ENCODE measurements at regions of chr3 and their contacts with region 1.

Region 1: DNA sequence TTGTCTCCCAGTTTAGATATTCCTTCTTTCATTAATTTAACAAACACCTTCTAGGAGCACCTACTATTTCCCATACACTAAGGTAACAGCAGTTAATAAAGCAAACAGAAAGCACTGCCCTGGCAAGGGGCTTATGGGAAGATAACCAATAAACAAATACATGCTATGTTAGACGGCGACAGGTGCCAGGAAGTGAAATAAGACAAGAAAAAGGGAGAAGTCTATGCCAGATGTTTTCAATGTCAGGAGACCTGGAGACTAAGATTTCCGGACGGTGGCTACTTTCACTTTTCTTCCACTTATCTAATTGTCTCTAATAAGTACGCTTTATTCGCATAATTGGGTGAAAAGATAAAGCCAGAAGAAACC is 32.5 kb upstream of the ZNF445 start:
- DNase-seq: peak in 4 of 9 experiments; percentile 6 to 54 (median 21)
- ATAC-seq: peak; percentile 27
- H3K4me3 ChIP-seq: peak overlapping the region; percentile 78
- H3K4me3 Mint-ChIP-seq: peak overlapping the region; percentile 96
- H3K27ac ChIP-seq: peak overlapping the region; percentile 61 to 82
- H3K27ac Mint-ChIP-seq: peak overlapping the region; percentile 96
- H3K4me1 ChIP-seq: peaks cover 22% of the 10 kb centered on the region
- H3K4me1 Mint-ChIP-seq: peaks cover 49% of the 10 kb centered on the region
- H3K27me3 ChIP-seq: no peaks in the 10 kb centered on the region
- H3K27me3 Mint-ChIP-seq: no peaks in the 10 kb centered on the region
- CTCF ChIP-seq: no peak

Region 2: DNA sequence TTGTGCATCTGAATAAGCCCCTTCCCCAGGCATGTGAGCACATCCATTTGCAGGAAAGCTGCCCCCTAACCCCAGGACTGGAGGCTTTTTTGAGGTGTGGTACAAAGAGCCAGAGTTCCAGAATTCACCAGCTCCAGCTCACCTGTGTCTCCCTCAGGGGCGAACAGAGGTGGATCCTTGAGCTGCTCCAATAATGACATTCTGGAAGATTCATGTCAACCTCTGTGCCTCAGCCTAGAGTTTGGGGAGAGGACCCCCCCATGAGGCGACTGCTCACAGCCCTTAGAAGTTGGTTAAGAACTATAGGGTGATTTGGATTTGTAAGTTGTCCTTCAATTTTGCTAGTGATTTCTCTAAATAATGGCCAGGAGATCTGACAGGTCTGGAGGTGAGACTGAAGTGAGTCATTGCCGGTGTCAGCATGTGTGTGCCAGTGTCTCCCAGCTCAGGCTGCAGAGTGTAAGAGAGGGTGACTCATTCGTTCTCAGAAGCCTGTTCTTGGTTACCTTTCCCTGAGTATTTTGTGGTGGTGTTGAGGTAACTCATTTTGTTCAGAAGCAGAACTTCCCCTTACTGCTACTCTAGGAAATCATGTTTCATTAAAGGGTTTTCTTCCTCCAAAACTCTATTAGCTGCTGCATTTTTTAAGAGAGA is 405.2 kb before region 1 on chr3:
- CTCF ChIA-PET with region 1: no interaction called
- POLR2A ChIA-PET with region 1: no interaction called
- intact Hi-C with region 1: no loop called
- DNase-seq: peak in 1 of 9 experiments; percentile 9
- ATAC-seq: no peak
- H3K4me3 ChIP-seq: no peak overlapping the region
- H3K4me3 Mint-ChIP-seq: no peak overlapping the region
- H3K27ac ChIP-seq: no peak overlapping the region
- H3K27ac Mint-ChIP-seq: no peak overlapping the region
- H3K4me1 ChIP-seq: no peaks in the 10 kb centered on the region
- H3K4me1 Mint-ChIP-seq: peaks cover 3% of the 10 kb centered on the region
- H3K27me3 ChIP-seq: no peaks in the 10 kb centered on the region
- H3K27me3 Mint-ChIP-seq: peaks cover 13% of the 10 kb centered on the region
- CTCF ChIP-seq: no peak

Region 3: DNA sequence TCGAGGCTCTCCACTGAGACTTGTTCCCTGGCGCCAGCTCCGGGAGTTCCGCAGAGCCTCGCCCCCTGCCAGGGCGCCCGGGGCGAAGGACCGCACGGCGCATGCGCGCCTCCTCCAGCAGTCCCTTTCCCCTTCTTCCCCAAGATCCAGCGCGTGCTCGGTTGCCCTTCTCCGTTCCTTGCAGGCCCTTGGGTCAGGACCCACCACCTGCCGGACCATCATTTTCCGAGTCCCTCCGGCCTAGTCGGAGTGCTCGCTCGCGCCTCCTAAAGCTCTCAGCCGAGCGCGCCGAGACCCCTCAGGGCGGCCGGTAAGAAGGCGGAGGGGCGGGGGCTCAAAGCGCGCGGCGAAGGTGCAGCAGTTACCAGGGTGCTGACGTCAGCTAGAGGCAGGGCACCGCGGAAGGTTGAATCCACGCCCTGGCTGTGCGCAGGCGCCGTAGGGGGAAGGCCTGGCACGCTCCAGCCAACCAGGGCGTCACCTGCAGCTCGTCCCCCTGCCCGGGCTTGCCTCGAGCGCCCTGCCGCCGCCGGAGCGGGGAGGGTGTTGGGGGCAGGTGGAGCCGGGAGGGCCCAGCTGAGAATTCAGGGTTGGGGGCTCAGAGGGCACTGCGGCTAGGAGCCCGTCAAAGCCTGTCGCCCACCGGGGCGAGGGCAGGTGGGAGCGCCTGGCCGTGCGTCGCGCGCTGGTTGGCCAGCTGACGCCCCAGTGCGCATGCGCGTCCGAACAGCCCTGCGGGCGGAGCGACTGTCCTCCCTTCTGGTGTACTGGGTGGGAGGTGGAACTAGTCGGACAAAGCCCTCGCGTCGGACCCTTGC is 171.8 kb before region 1 on chr3 and contains the start of gene TCAIM:
- CTCF ChIA-PET with region 1: no interaction called
- POLR2A ChIA-PET with region 1: interaction called, 23 read pairs
- intact Hi-C with region 1: loop called (anchors 1 kb)
- DNase-seq: peak; percentile 97 to 100 (median 99)
- ATAC-seq: peak; percentile 92
- H3K4me3 ChIP-seq: peak within 1 kb of the TSS; percentile 76 to 91
- H3K4me3 Mint-ChIP-seq: peak within 1 kb of the TSS; percentile 93
- H3K27ac ChIP-seq: peak within 1 kb of the TSS; percentile 88 to 93
- H3K27ac Mint-ChIP-seq: peak within 1 kb of the TSS; percentile 97
- H3K4me1 ChIP-seq: peaks cover 15% of the 10 kb centered on the region
- H3K4me1 Mint-ChIP-seq: peaks cover 32% of the 10 kb centered on the region
- H3K27me3 ChIP-seq: no peaks in the 10 kb centered on the region
- H3K27me3 Mint-ChIP-seq: peaks cover 6% of the 10 kb centered on the region
- CTCF ChIP-seq: no peak
- total RNA-seq, gene TCAIM: 3.1 to 3.7 TPM

Region 4: DNA sequence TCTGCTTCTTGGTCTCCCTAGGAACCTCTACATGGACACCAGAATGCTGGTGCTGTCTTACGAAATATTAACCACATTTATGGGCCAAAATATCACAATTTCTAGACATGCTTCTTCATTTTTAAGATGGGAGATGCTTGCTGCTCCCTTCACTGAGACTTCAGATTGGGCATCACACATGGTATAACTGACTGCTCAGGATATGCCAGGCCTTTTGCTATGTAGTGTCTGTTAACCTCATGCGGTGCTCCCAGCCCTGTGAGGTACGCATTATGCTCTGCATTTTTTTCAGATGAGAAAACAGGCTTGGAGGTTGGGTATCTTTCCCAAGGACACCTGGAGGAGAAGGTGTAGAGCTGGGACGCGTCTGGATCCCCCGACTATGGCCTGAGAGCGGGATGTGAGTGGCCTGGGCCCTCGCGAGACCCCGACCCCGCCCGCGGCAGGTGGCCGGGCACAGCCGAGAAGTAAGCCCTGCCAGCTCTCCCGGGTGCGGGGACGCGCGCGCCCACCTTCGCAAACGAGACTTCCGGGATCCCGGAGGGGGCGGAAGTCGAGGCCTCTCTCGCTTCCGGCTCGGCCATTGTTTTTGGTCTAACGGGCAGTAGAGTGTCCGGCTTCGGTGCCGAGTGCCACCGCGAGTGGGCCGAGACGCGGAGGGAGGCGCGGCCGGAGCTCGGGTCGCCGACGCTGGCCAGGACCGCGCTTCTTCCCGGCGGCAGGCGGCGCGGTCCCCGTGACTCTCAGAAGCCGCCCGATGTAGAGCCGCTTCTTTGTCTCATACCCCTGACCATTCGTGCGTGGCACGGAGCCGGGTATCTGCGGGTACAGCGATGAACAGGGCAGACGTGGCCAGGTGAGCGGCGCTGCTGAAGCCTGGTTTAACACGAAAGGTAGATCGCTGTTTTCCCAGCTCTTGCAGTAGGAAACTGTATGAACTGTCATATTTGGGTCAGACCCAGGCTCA is 44.9 kb after region 1 on chr3 and contains the start of gene ZKSCAN7:
- CTCF ChIA-PET with region 1: no interaction called
- POLR2A ChIA-PET with region 1: interaction called, 19 read pairs
- intact Hi-C with region 1: loop called in 1 of 2 experiments (anchors 2 kb)
- DNase-seq: peak; percentile 20 to 79 (median 51)
- ATAC-seq: peak; percentile 74
- H3K4me3 ChIP-seq: peak within 1 kb of the TSS; percentile 76 to 88
- H3K4me3 Mint-ChIP-seq: peak within 1 kb of the TSS; percentile 93
- H3K27ac ChIP-seq: peak within 1 kb of the TSS; percentile 58 to 74
- H3K27ac Mint-ChIP-seq: peak within 1 kb of the TSS; percentile 92
- H3K4me1 ChIP-seq: peaks cover 9% of the 10 kb centered on the region
- H3K4me1 Mint-ChIP-seq: peaks cover 30% of the 10 kb centered on the region
- H3K27me3 ChIP-seq: no peaks in the 10 kb centered on the region
- H3K27me3 Mint-ChIP-seq: peaks cover 9% of the 10 kb centered on the region
- CTCF ChIP-seq: no peak
- total RNA-seq, gene ZKSCAN7: 0.68 to 1.6 TPM

Region 5: DNA sequence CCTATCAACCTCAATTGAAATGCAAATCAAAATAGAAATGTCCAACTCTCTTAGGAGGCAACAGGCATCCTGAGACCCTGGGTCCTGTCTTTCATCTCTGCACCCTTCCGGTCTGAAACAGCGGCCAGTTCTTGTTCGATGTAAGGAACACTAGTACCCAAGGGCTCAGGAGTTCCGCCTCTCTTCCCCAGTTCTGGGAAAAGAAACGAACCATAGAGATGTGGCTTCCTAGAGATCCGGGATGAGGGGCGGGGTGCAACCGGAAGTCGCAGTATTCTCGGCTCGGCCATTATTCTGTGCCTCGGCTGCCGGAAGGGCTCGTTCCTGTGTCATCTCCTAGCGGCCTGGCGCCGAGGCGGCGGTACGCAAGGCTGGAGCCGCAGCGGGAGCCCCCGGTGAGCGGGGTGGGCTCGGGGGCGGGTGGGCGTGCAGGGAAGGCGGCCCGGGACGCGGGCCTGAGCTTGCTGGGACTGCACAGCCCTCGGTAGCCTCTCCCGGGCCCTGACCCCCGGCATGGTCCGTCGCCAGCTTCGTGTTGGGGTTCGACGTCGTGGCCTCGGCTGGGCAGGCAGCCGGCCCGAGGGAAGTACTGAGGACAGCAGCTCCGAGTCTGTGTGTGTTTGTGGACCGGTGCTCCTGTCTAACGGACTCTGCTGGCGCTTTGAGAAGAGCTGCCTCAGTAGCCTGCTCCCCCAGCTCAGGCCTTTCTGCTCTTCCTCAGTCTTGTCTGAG is 114.9 kb after region 1 on chr3 and contains the start of gene ZNF197:
- CTCF ChIA-PET with region 1: no interaction called
- POLR2A ChIA-PET with region 1: no interaction called
- intact Hi-C with region 1: no loop called
- DNase-seq: peak in 8 of 9 experiments; percentile 42 to 76 (median 55)
- ATAC-seq: peak; percentile 76
- H3K4me3 ChIP-seq: peak within 1 kb of the TSS; percentile 66 to 70
- H3K4me3 Mint-ChIP-seq: peak within 1 kb of the TSS; percentile 88
- H3K27ac ChIP-seq: peak within 1 kb of the TSS; percentile 49 to 60
- H3K27ac Mint-ChIP-seq: peak within 1 kb of the TSS; percentile 80
- H3K4me1 ChIP-seq: peaks cover 13% of the 10 kb centered on the region
- H3K4me1 Mint-ChIP-seq: peaks cover 46% of the 10 kb centered on the region
- H3K27me3 ChIP-seq: no peaks in the 10 kb centered on the region
- H3K27me3 Mint-ChIP-seq: no peaks in the 10 kb centered on the region
- CTCF ChIP-seq: no peak
- total RNA-seq, gene ZNF197: 2.9 to 3.5 TPM

Region 6: GRCh38 chr3:44861412-44862220 is 351.6 kb after region 1 on chr3 and contains the start of gene TMEM42:
- CTCF ChIA-PET with region 1: no interaction called
- POLR2A ChIA-PET with region 1: no interaction called
- intact Hi-C with region 1: loop called in 1 of 2 experiments (anchors 1 kb)
- DNase-seq: peak; percentile 72 to 96 (median 87)
- ATAC-seq: peak; percentile 89
- H3K4me3 ChIP-seq: peak within 1 kb of the TSS; percentile 86 to 92
- H3K4me3 Mint-ChIP-seq: peak within 1 kb of the TSS; percentile 87
- H3K27ac ChIP-seq: peak within 1 kb of the TSS; percentile 90 to 91
- H3K27ac Mint-ChIP-seq: peak within 1 kb of the TSS; percentile 92
- H3K4me1 ChIP-seq: peaks cover 31% of the 10 kb centered on the region
- H3K4me1 Mint-ChIP-seq: peaks cover 45% of the 10 kb centered on the region
- H3K27me3 ChIP-seq: no peaks in the 10 kb centered on the region
- H3K27me3 Mint-ChIP-seq: no peaks in the 10 kb centered on the region
- CTCF ChIP-seq: no peak
- total RNA-seq, gene TMEM42: 6.6 to 8.3 TPM

Region 7: DNA sequence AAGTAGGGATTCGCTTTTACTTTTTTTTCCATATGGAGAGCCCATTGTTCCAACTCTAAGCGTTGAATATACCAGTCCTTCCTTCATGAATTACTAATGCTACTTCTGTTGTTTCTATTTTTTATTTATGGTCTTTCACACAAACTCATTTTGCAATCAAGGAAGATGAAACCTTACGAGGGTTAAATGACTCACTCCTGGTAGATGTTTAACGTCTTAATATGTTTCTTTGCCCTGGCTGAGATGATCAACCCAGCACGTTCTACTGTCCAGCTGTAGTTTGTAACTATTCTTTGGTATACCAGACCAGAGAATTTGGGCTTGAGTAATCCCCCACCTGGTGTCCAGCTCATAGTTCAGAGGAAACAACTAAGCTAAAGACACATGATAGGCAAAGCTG is 613.0 kb after region 1 on chr3:
- CTCF ChIA-PET with region 1: no interaction called
- POLR2A ChIA-PET with region 1: no interaction called
- intact Hi-C with region 1: no loop called
- DNase-seq: no peak
- ATAC-seq: no peak
- H3K4me3 ChIP-seq: no peak overlapping the region
- H3K4me3 Mint-ChIP-seq: no peak overlapping the region
- H3K27ac ChIP-seq: no peak overlapping the region
- H3K27ac Mint-ChIP-seq: no peak overlapping the region
- H3K4me1 ChIP-seq: peaks cover 14% of the 10 kb centered on the region
- H3K4me1 Mint-ChIP-seq: peaks cover 15% of the 10 kb centered on the region
- H3K27me3 ChIP-seq: peaks cover 3 to 4% of the 10 kb centered on the region in 2 experiments
- H3K27me3 Mint-ChIP-seq: peaks cover 19% of the 10 kb centered on the region
- CTCF ChIP-seq: no peak